Esophagus muscularis mucosa (tissue), 4 donors: ENCODE measurements at regions of chr20 and their contacts with region 1.

Region 1: DNA sequence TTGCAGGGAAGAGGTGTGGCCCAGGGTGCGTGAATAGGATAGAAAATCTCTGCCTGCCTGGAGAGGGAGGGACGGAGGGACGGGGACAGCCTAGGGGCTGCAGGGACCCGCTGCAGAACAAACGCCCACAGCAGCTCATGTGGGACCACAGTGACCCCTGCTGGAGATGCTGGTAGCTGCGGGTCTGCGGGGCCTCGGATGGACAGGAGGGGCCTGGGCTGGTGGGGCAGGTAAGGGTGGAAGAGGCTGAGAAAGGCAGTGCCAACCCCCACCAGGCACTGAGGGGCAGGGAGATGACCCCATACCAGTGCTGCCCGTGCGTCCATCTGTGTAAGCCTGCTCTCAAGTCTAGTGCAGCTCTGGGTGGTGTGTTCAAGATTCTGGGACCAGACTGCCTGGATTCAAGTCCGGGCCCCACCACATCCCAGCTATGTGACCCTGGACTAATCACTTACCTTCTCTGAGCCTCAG is 39.4 kb downstream of the KIAA1755 start:
- DNase-seq: no peak
- H3K4me3 ChIP-seq: no peak overlapping the region
- H3K27ac ChIP-seq: no peak overlapping the region
- H3K4me1 ChIP-seq: peaks cover 4 to 24% (median 14%) of the 10 kb centered on the region in 4 donors
- H3K27me3 ChIP-seq: no peaks in the 10 kb centered on the region
- CTCF ChIP-seq: peak; percentile 79 to 93 (median 88)
- EP300 ChIP-seq: no peak
- POLR2A ChIP-seq: no peak

Region 2: DNA sequence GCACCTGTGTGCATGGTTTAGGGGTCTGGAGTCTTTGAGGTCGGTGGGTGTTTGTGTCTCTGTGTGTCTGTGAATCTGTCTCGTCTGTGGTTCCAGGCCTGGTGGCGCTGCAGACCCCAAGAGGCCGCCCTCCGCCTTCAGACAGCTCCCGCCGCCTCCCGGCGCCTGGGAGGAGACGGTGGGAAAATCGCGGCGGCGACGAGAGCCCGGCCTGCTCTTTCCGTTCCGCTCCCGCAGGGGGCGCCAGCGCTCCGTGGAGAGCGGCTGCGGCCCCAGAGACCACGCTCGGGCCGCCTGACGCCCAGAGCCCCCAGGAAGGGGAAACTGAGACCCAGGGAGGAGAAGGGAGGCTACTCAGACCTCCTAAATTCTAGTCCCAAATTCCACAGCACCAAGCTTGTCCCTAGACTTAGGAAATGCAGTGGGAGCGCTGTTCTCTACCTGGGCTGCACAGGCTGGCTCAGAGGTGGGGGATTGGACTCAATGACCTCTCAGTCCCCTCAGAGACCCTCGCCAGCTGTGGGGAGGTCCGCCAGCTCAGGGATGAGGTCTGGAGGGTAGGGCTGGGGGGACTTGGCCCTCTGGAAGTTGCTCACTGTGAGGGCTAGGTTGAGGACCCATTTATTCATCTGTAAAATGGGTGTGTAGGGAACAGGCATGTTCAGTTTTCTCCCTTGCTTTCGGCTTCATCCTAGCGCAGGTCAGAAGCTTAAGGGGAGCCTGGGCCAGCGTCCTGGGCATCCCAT is 656.6 kb before region 1 on chr20:
- intact Hi-C with region 1: loop called (anchors 2 kb)
- DNase-seq: peak; percentile 53
- H3K4me3 ChIP-seq: peak overlapping the region in 1 of 4 donors; percentile 2
- H3K27ac ChIP-seq: no peak overlapping the region
- H3K4me1 ChIP-seq: peaks cover 0 to 16% (median 13%) of the 10 kb centered on the region in 4 donors
- H3K27me3 ChIP-seq: peaks cover 0 to 54% (median 11%) of the 10 kb centered on the region in 4 donors
- CTCF ChIP-seq: peak; percentile 82 to 96 (median 86)
- EP300 ChIP-seq: no peak
- POLR2A ChIP-seq: no peak

Region 3: GRCh38 chr20:38057351-38057972 is 163.7 kb before region 1 on chr20:
- intact Hi-C with region 1: loop called (anchors 2 kb)
- DNase-seq: peak; percentile 95
- H3K4me3 ChIP-seq: no peak overlapping the region
- H3K27ac ChIP-seq: peak overlapping the region in 1 of 4 donors; percentile 6
- H3K4me1 ChIP-seq: peaks cover 0 to 16% (median 8%) of the 10 kb centered on the region in 4 donors
- H3K27me3 ChIP-seq: no peaks in the 10 kb centered on the region
- CTCF ChIP-seq: peak; percentile 83 to 87 (median 85)
- EP300 ChIP-seq: no peak
- POLR2A ChIP-seq: no peak